Panc1 (cell line): ENCODE measurements at regions of chr16 and their contacts with region 1.

Region 1: GRCh38 chr16:27566417-27566816 is 16.5 kb downstream of the KATNIP start:
- DNase-seq: no peak
- ATAC-seq: no peak
- H3K4me3 ChIP-seq: no peak overlapping the region
- H3K27ac ChIP-seq: no peak overlapping the region
- H3K4me1 ChIP-seq: no peaks in the 10 kb centered on the region
- H3K27me3 ChIP-seq: no peaks in the 10 kb centered on the region
- CTCF ChIP-seq: no peak

Region 2: DNA sequence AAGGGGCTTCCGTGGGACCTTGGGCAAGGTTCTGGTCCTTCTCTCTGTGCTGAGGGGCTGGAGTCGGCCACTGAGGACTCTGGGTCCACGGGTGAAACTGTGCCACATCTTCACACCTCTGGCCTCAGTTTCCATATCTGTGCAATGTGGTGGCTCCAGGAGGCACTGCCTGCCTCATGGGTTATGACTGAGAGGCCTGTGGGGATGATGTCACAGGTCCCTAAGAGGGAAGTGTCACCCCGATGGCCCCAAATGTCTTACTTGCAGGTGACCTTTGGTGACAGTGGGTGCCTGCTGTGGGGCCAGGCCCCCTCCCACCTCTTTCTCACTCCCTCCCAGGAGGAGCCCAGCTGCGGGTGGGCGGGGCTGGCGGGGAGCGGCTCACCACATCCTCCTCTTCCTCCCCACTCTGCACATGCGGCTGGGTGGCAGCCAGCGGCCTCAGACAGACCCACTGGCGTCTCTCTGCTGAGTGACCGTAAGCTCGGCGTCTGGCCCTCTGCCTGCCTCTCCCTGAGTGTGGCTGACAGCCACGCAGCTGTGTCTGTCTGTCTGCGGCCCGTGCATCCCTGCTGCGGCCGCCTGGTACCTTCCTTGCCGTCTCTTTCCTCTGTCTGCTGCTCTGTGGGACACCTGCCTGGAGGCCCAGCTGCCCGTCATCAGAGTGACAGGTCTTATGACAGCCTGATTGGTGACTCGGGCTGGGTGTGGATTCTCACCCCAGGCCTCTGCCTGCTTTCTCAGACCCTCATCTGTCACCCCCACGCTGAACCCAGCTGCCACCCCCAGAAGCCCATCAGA is 164.4 kb before region 1 on chr16 and contains the start of gene IL21R:
- CTCF ChIA-PET with region 1: no interaction called
- POLR2A ChIA-PET with region 1: no interaction called
- in situ Hi-C with region 1: no loop called
- intact Hi-C with region 1: no loop called
- DNase-seq: no peak
- ATAC-seq: peak; percentile 64
- H3K4me3 ChIP-seq: no peak within 1 kb of the TSS
- H3K27ac ChIP-seq: no peak within 1 kb of the TSS
- H3K4me1 ChIP-seq: no peaks in the 10 kb centered on the region
- H3K27me3 ChIP-seq: no peaks in the 10 kb centered on the region; the same call in 1 of the 2 replicates
- CTCF ChIP-seq: no peak
- total RNA-seq, gene IL21R: 0.10 TPM

Region 3: GRCh38 chr16:27475561-27475960 is 90.9 kb before region 1 on chr16:
- CTCF ChIA-PET with region 1: no interaction called
- POLR2A ChIA-PET with region 1: no interaction called
- in situ Hi-C with region 1: no loop called
- intact Hi-C with region 1: no loop called
- DNase-seq: no peak
- ATAC-seq: no peak
- H3K4me3 ChIP-seq: no peak overlapping the region
- H3K27ac ChIP-seq: no peak overlapping the region
- H3K4me1 ChIP-seq: no peaks in the 10 kb centered on the region
- H3K27me3 ChIP-seq: no peaks in the 10 kb centered on the region
- CTCF ChIP-seq: no peak

Region 4: GRCh38 chr16:28291873-28292660 is 725.6 kb after region 1 on chr16 and contains the start of gene SBK1:
- CTCF ChIA-PET with region 1: interaction called, 10 read pairs
- POLR2A ChIA-PET with region 1: no interaction called
- in situ Hi-C with region 1: no loop called
- intact Hi-C with region 1: no loop called
- DNase-seq: peak; percentile 46
- ATAC-seq: peak; percentile 93
- H3K4me3 ChIP-seq: peak within 1 kb of the TSS; percentile 52 to 68
- H3K27ac ChIP-seq: peak within 1 kb of the TSS; percentile 62
- H3K4me1 ChIP-seq: peaks cover 9% of the 10 kb centered on the region
- H3K27me3 ChIP-seq: no peaks in the 10 kb centered on the region
- CTCF ChIP-seq: no peak
- total RNA-seq, gene SBK1: 2.4 TPM